ENCODE measurements at regions of chr2 and their contacts with region 1.

Region 1: GRCh38 chr2:213246497-213247281 is 37.6 kb upstream of the SPAG16 start:
- DNase-seq: no peak
- H3K4me3 ChIP-seq: no peak overlapping the region
- CTCF ChIP-seq: peak; percentile 60

Region 2: DNA sequence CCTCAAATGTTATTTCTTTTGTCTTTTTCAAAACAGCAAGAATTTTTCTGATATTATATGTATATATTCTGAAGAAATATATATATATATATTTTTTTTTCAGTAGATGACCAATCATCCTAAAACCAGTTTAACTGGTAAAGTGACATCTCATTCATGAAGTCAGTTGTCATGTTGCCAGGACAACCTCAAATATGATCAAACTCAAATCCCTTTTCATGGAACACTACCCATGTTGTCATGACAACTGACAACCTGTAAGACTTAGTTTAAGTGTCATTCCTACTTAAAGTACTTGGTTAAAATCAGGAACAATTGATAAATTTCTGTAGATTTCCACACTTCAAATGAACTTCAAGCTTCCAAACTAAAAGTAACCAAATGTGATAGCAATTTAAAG is 606.3 kb before region 1 on chr2:
- CTCF ChIA-PET with region 1: no interaction called
- POLR2A ChIA-PET with region 1: no interaction called
- DNase-seq: no peak
- H3K4me3 ChIP-seq: no peak overlapping the region
- CTCF ChIP-seq: no peak

Region 3: GRCh38 chr2:212686285-212686895 is 560.3 kb before region 1 on chr2:
- CTCF ChIA-PET with region 1: interaction called, 28 read pairs
- POLR2A ChIA-PET with region 1: no interaction called
- DNase-seq: peak; percentile 5
- H3K4me3 ChIP-seq: no peak overlapping the region
- CTCF ChIP-seq: peak; percentile 68

Region 4: DNA sequence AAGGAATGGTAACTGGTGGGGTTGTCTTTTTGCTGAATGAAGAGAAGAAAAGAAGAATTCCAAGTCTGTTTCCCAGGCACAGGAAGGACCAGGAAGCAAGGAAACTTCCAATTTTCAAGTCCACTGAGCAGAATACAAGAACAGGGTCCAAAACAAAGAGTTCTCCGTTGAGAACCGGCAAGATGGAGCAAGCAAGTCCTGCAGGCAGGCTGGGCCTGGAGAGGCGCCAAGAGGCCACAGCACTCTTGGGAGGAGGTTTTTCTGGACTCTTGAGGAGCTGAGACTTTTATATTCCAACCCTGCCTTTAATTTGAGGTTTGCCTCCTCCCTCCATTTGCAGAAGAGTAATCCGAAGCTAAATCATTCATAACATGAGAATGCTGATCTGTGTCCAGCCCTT is 319.7 kb before region 1 on chr2:
- CTCF ChIA-PET with region 1: no interaction called
- POLR2A ChIA-PET with region 1: no interaction called
- DNase-seq: no peak
- H3K4me3 ChIP-seq: no peak overlapping the region
- CTCF ChIP-seq: no peak

Region 5: DNA sequence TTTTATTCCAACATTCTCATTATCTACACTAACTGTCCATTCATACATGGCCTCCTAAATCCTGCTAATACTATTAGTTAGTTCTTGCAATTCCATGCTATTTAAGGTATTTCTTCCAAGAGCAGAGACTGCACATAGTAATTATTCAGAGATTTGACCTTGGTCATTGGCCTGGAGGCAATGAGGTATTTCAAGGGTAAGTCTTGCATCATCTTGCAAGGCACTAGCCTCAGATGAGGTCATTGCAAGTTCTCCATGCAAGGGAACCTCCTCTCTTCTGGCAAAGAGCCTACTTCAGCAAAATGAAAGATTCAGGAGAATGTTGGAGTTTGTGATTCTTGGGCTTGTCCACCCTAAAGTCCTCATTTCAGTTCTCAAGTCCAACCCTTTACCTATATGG is 46.8 kb before region 1 on chr2:
- CTCF ChIA-PET with region 1: no interaction called
- POLR2A ChIA-PET with region 1: no interaction called
- DNase-seq: no peak
- H3K4me3 ChIP-seq: no peak overlapping the region
- CTCF ChIP-seq: no peak